ENCODE measurements at regions of chrX and their contacts with region 1.

Region 1: DNA sequence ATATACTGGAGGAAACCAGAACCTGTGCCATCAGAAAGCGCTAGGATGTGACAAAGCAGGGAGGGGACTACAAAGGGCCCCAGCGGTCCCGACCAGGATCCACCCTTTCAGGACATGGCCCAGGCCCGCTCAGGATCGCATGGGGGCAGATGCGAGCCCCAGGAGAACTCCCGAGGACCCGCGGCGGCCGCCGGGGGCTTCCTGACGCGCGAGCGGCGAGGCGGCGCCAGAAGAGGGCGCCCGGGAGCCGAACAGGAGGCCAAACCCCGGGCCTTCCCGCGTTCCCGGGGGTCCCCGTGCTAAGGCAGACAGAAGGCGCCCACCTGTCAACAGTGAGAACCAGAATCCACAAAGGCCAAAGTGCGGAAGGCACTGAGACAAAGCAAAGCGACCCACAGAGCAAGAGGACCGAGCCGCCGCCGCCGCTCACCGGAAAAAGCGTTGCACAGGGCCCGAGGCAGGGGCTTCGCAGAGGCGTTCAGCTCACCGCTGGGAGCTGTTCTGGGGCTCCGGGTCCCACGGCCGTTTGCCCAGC is 7.3 kb upstream of the OPN1LW start:
- DNase-seq: peak; percentile 56 to 73 (median 67)
- ATAC-seq: peak; percentile 89
- H3K4me3 ChIP-seq: peak overlapping the region; percentile 38
- H3K4me3 Mint-ChIP-seq: peak overlapping the region; percentile 69 to 90 (median 78)
- H3K27ac ChIP-seq: peak overlapping the region; percentile 73
- H3K27ac Mint-ChIP-seq: peak overlapping the region; percentile 78 to 95 (median 92)
- H3K4me1 ChIP-seq: peaks cover 16 to 32% of the 10 kb centered on the region in 2 donors
- H3K4me1 Mint-ChIP-seq: peaks cover 8 to 29% (median 17%) of the 10 kb centered on the region in 7 donors
- H3K27me3 ChIP-seq: no peaks in the 10 kb centered on the region
- H3K27me3 Mint-ChIP-seq: no peaks in the 10 kb centered on the region

Region 2: DNA sequence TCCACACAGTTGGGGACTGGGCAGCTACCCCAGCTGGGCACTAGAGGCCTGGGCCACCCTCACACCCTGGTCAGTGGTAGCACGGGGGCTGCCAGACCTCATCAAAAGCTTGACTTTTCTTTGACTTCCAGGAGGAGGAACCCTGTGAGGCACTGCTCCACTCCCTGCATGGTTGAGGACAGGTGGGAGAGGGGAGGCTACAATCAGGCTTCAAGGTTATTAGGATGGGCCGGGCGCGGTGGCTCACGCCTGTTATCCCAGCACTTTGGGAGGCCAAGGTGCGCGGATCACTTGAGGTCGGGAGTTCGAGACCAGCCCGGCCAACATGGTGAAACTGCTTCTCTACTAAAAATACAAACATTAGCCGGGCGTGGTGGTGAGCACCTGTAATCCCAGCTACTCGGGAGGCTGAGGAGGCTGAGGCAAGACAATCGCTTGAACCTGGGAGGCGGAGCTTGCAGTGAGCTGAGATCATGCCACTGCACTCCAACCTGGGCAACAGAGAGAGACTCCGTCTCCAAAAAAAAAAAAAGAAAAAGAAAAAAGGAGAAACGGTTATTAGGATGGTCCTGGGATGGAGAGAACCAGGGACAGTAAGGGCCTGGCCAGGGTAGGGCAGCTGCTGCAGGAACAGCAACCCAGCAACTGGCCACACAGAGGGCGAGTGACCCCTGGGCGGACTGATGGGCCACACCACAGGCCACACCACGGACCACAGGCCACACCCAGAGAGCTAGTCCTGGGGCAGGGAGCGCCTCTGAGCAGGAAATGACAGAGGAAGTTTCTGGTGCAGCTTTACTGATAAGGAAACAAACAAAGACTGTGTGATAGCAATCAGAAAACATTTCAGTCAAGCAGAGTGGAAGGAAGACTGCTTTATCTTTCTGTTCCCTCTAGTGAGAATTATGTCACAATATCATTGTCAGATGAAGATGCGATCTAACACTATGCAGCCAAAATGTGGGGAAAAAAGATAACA is 13.2 kb before region 1 on chrX:
- CTCF ChIA-PET with region 1: interaction called, 5 read pairs
- POLR2A ChIA-PET with region 1: interaction called, 10 read pairs
- intact Hi-C with region 1: loop called (anchors 1 kb)
- DNase-seq: peak in 7 of 9 donors; percentile 18 to 48 (median 32)
- ATAC-seq: peak; percentile 91
- H3K4me3 ChIP-seq: peak overlapping the region; percentile 27
- H3K4me3 Mint-ChIP-seq: peak overlapping the region; percentile 27 to 74 (median 56)
- H3K27ac ChIP-seq: no peak overlapping the region
- H3K27ac Mint-ChIP-seq: peak overlapping the region; percentile 34 to 80 (median 72)
- H3K4me1 ChIP-seq: peaks cover 21 to 30% of the 10 kb centered on the region in 2 donors
- H3K4me1 Mint-ChIP-seq: peaks cover 0 to 30% (median 25%) of the 10 kb centered on the region in 7 donors
- H3K27me3 ChIP-seq: no peaks in the 10 kb centered on the region
- H3K27me3 Mint-ChIP-seq: no peaks in the 10 kb centered on the region

Region 3: DNA sequence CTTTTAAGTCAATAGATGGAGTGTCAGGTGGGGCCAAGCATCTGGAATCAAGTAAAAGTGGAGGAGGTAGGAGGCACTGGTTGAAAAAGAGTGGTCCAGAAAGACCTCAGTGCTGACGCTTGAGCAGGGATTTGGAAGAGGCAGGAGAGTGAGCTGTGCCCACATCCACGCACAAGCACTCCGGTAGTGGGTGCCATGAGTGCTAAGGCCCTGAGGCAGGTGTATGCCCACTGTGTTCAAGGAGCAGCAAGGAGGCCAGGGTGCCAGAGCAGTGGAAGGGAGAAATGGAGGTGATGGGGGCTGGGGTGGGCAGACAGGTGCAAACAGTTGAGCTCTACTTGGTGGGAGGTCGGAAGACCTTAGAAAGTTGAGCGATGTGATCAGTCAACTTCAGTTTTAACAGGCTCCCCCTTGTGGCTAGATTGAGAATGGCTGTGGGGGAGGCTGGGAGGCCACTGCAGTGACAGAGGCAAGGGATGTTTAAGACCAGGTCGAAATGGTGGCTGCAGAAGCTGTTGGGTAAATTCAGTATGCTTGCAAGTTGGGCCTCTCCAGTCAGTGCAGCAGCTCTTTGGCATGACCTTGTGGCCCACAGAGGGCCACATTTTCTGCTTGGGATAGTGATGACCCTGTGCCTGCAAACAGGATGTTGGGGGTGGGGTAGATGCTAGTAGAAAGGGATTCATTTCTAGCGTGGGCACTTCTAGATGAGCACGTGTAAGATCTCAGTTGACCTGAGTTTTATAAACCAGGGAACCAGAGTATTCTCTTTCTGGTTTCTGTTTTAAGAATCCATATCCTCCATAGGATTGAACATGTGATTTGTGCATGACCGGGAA is 171.6 kb after region 1 on chrX:
- CTCF ChIA-PET with region 1: interaction called, 9 read pairs
- POLR2A ChIA-PET with region 1: interaction called, 4 read pairs
- intact Hi-C with region 1: loop called in 1 of 2 experiments (anchors 1 kb)
- DNase-seq: peak; percentile 47 to 83 (median 71)
- ATAC-seq: peak; percentile 91
- H3K4me3 ChIP-seq: peak overlapping the region; percentile 20
- H3K4me3 Mint-ChIP-seq: peak overlapping the region; percentile 29 to 63 (median 46)
- H3K27ac ChIP-seq: no peak overlapping the region
- H3K27ac Mint-ChIP-seq: peak overlapping the region in 8 of 9 donors; percentile 2 to 85 (median 50)
- H3K4me1 ChIP-seq: peaks cover 26 to 35% of the 10 kb centered on the region in 2 donors
- H3K4me1 Mint-ChIP-seq: peaks cover 17 to 38% (median 29%) of the 10 kb centered on the region in 7 donors
- H3K27me3 ChIP-seq: no peaks in the 10 kb centered on the region
- H3K27me3 Mint-ChIP-seq: no peaks in the 10 kb centered on the region

Measured in naive thymus-derived CD4-positive, alpha-beta T cell (primary cell).